Activated CD4-positive, alpha-beta T cell treated with anti-CD3 and anti-CD28 coated beads for 36 hours (primary cell): ENCODE measurements at regions of chr9 and their contacts with region 1.

Region 1: GRCh38 chr9:74773886-74774479 is 113.7 kb downstream of the TRPM6 start:
- DNase-seq: peak; percentile 85
- ATAC-seq: peak; percentile 45
- H3K4me3 Mint-ChIP-seq: no peak overlapping the region
- H3K27ac Mint-ChIP-seq: peak overlapping the region; percentile 31
- H3K4me1 Mint-ChIP-seq: peaks cover 20% of the 10 kb centered on the region
- H3K27me3 Mint-ChIP-seq: peaks cover 16% of the 10 kb centered on the region

Region 2: DNA sequence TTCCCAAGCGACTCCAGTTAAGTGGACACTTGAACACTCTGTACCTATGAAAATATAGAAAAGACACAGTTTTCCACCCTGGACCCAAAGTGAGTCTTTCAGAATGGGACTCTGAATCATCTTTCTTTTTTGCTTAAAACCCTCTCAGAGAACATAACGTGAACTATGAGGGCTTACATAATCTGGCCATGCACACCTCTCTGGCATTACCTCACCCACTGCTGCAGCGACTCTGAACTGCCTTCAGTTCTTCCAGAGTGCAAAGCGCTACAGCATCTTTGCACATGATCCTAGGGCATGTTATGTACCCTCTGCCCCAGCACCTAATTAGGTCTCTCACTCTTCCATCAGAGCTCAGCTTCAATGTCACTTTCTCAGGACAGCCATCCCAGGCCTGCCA is 90.7 kb before region 1 on chr9:
- CTCF ChIA-PET with region 1: no interaction called
- POLR2A ChIA-PET with region 1: no interaction called
- intact Hi-C with region 1: no loop called
- DNase-seq: no peak
- ATAC-seq: no peak
- H3K4me3 Mint-ChIP-seq: no peak overlapping the region
- H3K27ac Mint-ChIP-seq: no peak overlapping the region
- H3K4me1 Mint-ChIP-seq: no peaks in the 10 kb centered on the region
- H3K27me3 Mint-ChIP-seq: peaks cover 7% of the 10 kb centered on the region

Region 3: DNA sequence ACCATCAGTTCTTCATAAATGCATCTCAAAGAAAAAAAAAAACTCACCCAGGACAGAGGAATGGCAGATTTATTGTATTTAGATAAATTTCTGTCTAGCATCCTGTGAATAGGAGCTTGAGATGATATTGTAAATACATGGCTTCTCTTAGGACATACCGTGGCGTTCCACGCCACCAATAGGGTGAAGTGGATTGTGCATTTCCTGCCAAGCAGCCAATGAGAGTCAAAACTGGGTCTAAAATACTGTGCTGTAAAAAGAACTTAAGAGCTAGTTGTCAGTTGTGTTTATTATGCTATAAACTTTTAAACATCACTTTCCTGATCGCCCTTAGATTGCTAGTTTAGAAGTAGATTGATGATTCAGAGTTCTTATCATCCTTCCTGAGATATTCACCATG is 134.7 kb after region 1 on chr9:
- CTCF ChIA-PET with region 1: no interaction called
- POLR2A ChIA-PET with region 1: no interaction called
- intact Hi-C with region 1: no loop called
- DNase-seq: no peak
- ATAC-seq: no peak
- H3K4me3 Mint-ChIP-seq: no peak overlapping the region
- H3K27ac Mint-ChIP-seq: no peak overlapping the region
- H3K4me1 Mint-ChIP-seq: no peaks in the 10 kb centered on the region
- H3K27me3 Mint-ChIP-seq: peaks cover 23% of the 10 kb centered on the region

Region 4: DNA sequence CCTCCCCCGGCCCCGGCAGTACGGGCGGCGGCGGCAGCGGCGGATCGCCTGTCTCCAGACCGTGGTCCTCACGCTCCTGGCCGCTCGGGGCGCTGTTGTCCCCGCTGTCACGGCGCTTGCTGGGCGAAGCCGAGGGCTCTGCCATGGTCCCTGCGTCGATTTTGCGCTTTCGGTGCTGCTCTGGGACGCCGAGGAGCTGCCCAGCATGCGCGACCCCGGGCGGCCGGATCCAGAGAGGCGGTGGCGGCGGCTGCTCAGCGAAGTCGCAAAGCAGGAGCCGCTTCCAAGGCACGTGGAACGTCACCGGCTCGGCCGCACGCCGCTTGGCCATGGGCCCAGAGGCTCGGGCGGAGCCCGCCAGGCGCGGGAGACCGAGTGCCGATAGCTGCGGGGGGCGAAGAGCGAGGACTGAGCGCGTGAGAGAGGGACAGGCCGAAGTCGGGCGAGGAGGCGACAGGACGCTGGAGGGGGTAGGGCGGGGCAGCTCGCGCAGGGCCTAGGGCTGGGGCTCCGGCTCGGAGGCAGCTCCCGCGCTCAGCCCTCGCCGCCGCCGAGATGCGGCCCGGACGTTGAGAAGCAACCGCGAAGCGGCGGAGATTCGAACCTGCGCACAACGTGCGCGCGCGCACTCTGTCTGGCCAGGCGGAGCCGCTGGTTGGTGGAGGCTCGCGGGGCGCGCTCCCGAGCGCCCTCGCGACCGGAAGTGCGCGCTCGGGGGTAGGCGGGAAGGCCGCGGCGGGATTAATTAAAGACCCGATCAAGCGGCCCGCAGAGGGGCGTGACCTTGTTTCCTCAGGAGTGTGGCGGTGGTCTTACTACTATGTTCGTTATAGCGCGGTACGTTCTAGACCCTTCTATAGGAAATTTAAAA is 178.5 kb after region 1 on chr9 and contains the start of gene C9orf40:
- CTCF ChIA-PET with region 1: interaction called, 11 read pairs
- POLR2A ChIA-PET with region 1: no interaction called
- intact Hi-C with region 1: loop called (anchors 1 to 2 kb)
- DNase-seq: peak; percentile 95
- ATAC-seq: peak; percentile 93
- H3K4me3 Mint-ChIP-seq: peak within 1 kb of the TSS; percentile 93
- H3K27ac Mint-ChIP-seq: peak within 1 kb of the TSS; percentile 96
- H3K4me1 Mint-ChIP-seq: peaks cover 28% of the 10 kb centered on the region
- H3K27me3 Mint-ChIP-seq: no peaks in the 10 kb centered on the region
- total RNA-seq, gene C9orf40: 14.0 to 19.7 TPM

Region 5: GRCh38 chr9:75013735-75014134 is 239.8 kb after region 1 on chr9:
- CTCF ChIA-PET with region 1: interaction called, 160 read pairs
- POLR2A ChIA-PET with region 1: no interaction called
- intact Hi-C with region 1: no loop called
- DNase-seq: no peak
- ATAC-seq: no peak
- H3K4me3 Mint-ChIP-seq: no peak overlapping the region
- H3K27ac Mint-ChIP-seq: no peak overlapping the region
- H3K4me1 Mint-ChIP-seq: peaks cover 35% of the 10 kb centered on the region
- H3K27me3 Mint-ChIP-seq: no peaks in the 10 kb centered on the region

Region 6: GRCh38 chr9:75071530-75072124 is 297.6 kb after region 1 on chr9:
- CTCF ChIA-PET with region 1: interaction called, 25 read pairs
- POLR2A ChIA-PET with region 1: no interaction called
- intact Hi-C with region 1: no loop called
- DNase-seq: peak; percentile 86
- ATAC-seq: peak; percentile 96
- H3K4me3 Mint-ChIP-seq: peak overlapping the region; percentile 11
- H3K27ac Mint-ChIP-seq: peak overlapping the region; percentile 75
- H3K4me1 Mint-ChIP-seq: peaks cover 37% of the 10 kb centered on the region
- H3K27me3 Mint-ChIP-seq: no peaks in the 10 kb centered on the region

Region 7: DNA sequence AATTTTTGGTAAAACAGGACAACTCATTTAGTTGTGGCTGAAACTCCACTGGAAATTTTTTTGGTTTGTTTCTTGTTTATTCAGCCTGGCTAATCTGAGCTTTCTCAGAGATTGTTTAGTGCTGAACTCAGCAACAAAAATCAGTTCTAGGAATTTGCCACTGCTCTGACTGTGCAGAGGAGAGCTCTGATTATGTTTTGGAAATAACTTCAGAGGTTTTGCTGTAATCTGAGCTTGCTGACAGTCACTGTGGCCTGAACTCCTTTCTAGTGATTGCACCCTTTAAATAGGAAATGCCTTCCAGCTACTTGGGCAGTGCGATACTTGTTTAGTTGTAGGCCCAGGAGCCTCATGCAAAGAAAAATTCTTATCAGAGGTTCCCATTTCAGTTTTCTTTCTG is 374.6 kb after region 1 on chr9:
- CTCF ChIA-PET with region 1: interaction called, 4 read pairs
- POLR2A ChIA-PET with region 1: no interaction called
- intact Hi-C with region 1: loop called in 1 of 2 experiments (anchors 5 kb)
- DNase-seq: peak; percentile 28
- ATAC-seq: peak; percentile 58
- H3K4me3 Mint-ChIP-seq: no peak overlapping the region
- H3K27ac Mint-ChIP-seq: peak overlapping the region; percentile 89
- H3K4me1 Mint-ChIP-seq: peaks cover 71% of the 10 kb centered on the region
- H3K27me3 Mint-ChIP-seq: no peaks in the 10 kb centered on the region

Region 8: DNA sequence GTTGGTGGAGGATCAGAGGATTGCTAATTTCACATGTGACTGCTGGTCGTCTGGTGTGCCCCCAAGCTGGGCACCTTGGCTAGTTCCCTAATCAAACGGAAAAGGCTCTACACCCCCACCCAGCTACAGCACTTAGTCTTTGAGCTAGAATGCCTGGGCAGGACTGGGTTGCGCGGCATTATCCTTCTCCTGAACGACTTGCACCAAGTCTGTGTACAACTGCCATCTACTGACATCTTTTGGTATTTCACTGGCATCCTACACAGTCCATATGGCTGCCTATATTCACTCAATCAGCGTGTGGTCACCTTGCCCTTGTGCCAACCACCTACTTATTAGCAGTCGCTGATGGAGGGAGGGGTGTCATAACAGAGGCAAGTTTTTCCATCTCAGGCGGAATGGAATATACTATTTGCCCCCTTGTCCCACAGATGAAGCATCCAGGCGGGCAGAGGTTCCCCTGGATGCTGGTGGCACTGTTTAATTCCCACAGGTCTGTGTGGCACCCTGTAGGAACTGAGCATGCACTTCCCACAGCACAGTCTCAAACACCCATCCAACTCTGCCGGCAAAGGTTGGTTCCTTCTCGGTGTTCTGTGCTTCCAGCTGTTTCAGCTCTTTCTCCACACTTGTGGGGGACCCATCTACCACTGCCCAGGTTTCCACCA is 464.5 kb after region 1 on chr9:
- CTCF ChIA-PET with region 1: no interaction called
- POLR2A ChIA-PET with region 1: no interaction called
- intact Hi-C with region 1: loop called (anchors 1 kb)
- DNase-seq: peak; percentile 63
- ATAC-seq: peak; percentile 99
- H3K4me3 Mint-ChIP-seq: no peak overlapping the region
- H3K27ac Mint-ChIP-seq: no peak overlapping the region
- H3K4me1 Mint-ChIP-seq: no peaks in the 10 kb centered on the region
- H3K27me3 Mint-ChIP-seq: no peaks in the 10 kb centered on the region